Endothelial cell of umbilical vein (primary cell): ENCODE measurements at regions of chr10 and their contacts with region 1.

Region 1: DNA sequence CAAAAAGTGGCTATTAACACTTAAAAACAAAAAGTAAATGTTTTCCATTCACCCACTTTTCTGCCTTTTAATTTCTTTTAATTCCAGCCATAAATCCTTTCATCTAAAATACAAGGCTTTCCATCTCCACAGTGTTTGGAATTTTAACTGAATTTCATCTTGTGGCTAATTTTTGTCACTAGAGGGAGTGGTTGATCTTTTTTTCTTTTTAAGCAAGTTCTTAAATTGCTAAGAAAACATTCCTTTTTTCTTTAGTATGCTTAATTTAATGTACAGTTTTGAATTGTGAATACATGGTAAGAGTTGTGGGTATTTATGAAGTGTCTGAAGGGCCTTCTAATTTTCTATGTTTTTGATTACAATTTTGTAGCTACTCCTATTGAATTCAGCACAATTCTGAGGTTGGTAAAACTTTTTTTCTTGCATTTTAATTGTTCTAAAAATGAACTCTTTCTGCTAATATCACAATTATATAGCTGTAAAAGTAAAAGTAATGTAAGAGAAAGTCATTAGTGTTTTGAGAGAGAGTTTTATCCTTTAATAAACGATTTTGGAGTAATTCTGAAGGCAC is 54.9 kb upstream of the ANK3 start:
- DNase-seq: peak; percentile 45
- H3K4me3 ChIP-seq: no peak overlapping the region
- H3K27ac ChIP-seq: no peak overlapping the region
- H3K4me1 ChIP-seq: peaks cover 7% of the 10 kb centered on the region
- H3K27me3 ChIP-seq: no peaks in the 10 kb centered on the region
- CTCF ChIP-seq: peak; percentile 14 to 18
- POLR2A ChIP-seq: no peak

Region 2: DNA sequence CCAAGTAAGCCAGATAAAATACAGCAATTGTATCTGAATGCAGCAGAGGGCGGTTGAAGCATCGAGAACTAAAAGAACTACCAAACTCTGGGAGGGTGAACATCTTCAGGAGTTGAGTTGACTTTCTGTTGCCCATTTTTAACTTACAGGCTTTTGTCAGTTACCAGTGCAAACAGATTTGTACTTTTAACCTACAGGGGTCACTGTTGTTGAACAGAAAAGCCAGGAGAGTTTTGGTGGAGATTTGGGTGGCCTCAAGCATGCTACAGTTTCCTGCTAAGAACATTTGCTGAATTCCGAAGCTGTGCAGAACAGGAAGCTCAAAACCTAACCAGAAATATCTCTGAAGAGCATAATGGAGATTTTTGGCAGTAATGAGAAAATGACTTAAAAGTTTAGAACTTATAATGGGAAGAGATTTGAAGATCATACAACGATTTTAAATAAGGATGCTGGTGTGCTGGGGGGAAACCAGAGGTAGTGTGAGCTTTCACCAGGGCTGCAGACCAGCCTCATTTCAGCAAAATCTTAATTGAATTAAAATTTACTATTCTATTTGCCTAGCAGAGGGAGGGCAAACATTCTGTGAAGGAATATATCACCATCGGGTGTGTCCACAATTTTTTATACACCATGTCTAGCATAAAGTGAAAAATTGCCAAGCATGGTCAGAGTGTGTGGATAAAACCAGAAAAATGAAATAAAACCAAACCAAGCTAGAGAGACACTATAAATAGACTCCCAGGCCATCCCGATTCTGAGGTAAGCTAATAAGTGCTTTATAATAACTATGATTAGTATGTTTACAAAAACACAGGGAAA is 329.6 kb before region 1 on chr10:
- CTCF ChIA-PET with region 1: interaction called, 27 read pairs
- POLR2A ChIA-PET with region 1: no interaction called
- dilution Hi-C with region 1: no loop called
- intact Hi-C with region 1: no loop called
- DNase-seq: peak; percentile 69
- H3K4me3 ChIP-seq: no peak overlapping the region
- H3K27ac ChIP-seq: no peak overlapping the region
- H3K4me1 ChIP-seq: no peaks in the 10 kb centered on the region
- H3K27me3 ChIP-seq: no peaks in the 10 kb centered on the region
- CTCF ChIP-seq: peak; percentile 49 to 55
- POLR2A ChIP-seq: no peak

Region 3: DNA sequence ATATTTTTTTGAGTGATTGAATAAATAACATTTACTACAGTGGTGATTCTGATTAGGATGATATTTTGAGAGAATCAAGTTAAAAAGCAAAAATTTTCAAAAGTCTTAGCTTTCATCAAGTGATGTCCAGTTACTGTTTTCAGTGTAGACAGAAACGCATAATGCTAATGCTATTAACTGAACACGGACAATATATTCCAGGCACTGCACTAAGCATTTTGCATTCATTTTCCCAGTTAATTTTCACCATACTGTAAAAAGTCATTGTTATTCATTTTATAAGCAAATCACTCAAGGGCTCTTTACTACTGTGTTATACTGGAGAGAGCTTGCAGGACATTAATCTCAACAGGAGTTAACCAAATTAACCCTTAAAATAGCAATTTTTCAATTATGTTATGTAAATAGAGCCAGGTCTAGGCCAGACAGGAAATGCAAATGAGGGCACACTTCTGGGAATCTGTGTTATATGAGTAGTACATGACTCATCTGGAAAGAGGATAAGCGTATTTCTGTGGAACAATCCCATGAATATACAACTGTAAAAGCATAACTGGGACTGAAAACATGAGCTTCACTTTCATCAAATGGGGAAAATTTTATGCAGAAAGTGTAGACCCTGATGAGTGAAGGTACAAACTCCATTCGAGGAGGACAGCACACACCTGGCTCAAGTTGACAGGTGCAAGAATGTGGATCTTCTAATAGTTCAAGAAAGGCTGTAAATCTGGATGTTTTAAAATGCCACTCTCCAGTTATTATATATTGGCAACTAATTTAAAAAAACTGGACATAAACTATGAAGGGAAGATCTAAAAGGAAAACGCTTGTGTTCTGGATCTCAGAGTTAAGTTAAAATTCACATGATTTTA is 130.3 kb before region 1 on chr10:
- CTCF ChIA-PET with region 1: no interaction called
- POLR2A ChIA-PET with region 1: no interaction called
- dilution Hi-C with region 1: no loop called
- intact Hi-C with region 1: no loop called
- DNase-seq: peak; percentile 88
- H3K4me3 ChIP-seq: peak overlapping the region in 1 of 3 experiments; percentile 8
- H3K27ac ChIP-seq: peak overlapping the region; percentile 94
- H3K4me1 ChIP-seq: peaks cover 39% of the 10 kb centered on the region
- H3K27me3 ChIP-seq: no peaks in the 10 kb centered on the region
- CTCF ChIP-seq: no peak
- POLR2A ChIP-seq: no peak

Region 4: DNA sequence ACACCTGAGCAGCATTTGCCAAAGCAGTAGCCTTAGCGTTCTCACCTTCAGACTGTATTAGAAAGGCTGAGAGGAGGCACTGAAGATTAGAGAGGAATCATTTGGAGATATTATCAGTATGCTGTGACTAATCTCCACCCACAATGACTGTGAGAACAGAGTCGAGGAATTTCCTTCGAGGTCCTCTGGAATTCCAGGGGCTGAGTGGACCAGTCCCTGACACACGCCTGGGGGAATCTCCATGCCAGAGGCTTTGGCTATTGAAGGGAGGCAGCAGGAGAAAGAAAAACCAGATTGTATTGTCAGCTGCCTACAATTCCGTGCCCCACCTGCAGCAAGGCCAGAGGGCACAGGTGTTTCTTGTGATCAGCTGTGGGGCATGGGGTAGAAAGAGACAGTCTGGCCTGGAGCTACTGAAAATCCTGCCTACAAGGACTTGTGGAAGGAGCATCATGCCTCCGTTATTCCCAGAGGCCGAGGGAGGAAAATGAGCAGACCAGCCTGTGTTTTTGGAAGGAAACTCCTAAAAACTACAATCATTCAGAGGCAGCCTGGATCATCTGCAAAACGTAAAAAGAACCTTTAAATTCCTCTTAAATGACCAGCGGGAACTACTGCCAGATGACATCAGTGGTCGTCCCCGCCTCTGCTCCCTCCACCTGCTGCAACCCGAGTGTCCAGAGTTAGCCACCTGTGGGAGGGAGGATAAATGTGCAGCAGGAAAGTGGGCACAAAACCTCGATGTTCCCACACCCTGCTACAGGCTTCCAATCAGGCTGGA is 29.6 kb before region 1 on chr10:
- CTCF ChIA-PET with region 1: no interaction called
- POLR2A ChIA-PET with region 1: no interaction called
- dilution Hi-C with region 1: no loop called
- intact Hi-C with region 1: no loop called
- DNase-seq: peak; percentile 82
- H3K4me3 ChIP-seq: peak overlapping the region in 1 of 3 experiments; percentile 7
- H3K27ac ChIP-seq: peak overlapping the region; percentile 77
- H3K4me1 ChIP-seq: peaks cover 21% of the 10 kb centered on the region
- H3K27me3 ChIP-seq: no peaks in the 10 kb centered on the region
- CTCF ChIP-seq: no peak
- POLR2A ChIP-seq: no peak

Region 5: DNA sequence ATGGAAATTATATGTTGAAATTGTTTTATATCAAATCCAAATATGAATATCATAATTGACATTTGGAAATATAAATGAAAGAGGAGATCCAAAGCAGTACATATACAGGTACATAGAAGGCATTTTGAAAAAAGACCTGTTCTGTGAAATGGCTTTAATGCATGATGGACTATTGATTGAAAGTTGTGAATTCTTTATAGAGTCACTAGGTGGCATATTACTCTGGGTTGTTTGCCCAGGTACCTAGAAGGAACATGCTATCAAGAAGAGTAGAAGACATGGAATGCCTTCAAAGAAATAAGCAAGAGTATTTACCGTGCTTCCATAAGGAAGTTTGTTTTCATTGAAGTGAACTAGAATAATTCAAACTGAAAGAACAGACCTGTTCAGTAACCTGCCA is 105.1 kb after region 1 on chr10:
- CTCF ChIA-PET with region 1: no interaction called
- POLR2A ChIA-PET with region 1: no interaction called
- dilution Hi-C with region 1: no loop called
- intact Hi-C with region 1: no loop called
- DNase-seq: peak; percentile 24
- H3K4me3 ChIP-seq: no peak overlapping the region
- H3K27ac ChIP-seq: no peak overlapping the region
- H3K4me1 ChIP-seq: no peaks in the 10 kb centered on the region
- H3K27me3 ChIP-seq: no peaks in the 10 kb centered on the region
- CTCF ChIP-seq: peak in 1 of 2 donors; percentile 13
- POLR2A ChIP-seq: no peak

Region 6: GRCh38 chr10:60646966-60647796 is 202.6 kb after region 1 on chr10:
- CTCF ChIA-PET with region 1: interaction called, 63 read pairs
- POLR2A ChIA-PET with region 1: no interaction called
- dilution Hi-C with region 1: no loop called
- intact Hi-C with region 1: loop called (anchors 1 kb)
- DNase-seq: peak; percentile 65
- H3K4me3 ChIP-seq: no peak overlapping the region
- H3K27ac ChIP-seq: no peak overlapping the region
- H3K4me1 ChIP-seq: no peaks in the 10 kb centered on the region
- H3K27me3 ChIP-seq: no peaks in the 10 kb centered on the region
- CTCF ChIP-seq: peak; percentile 34 to 43
- POLR2A ChIP-seq: no peak

Region 7: GRCh38 chr10:60769406-60769805 is 324.8 kb after region 1 on chr10:
- CTCF ChIA-PET with region 1: interaction called, 11 read pairs
- POLR2A ChIA-PET with region 1: no interaction called
- dilution Hi-C with region 1: no loop called
- intact Hi-C with region 1: loop called (anchors 2 kb)
- DNase-seq: no peak
- H3K4me3 ChIP-seq: no peak overlapping the region
- H3K27ac ChIP-seq: no peak overlapping the region
- H3K4me1 ChIP-seq: no peaks in the 10 kb centered on the region
- H3K27me3 ChIP-seq: peaks cover 0 to 4% of the 10 kb centered on the region in 2 experiments
- CTCF ChIP-seq: no peak
- POLR2A ChIP-seq: no peak